Activated T-helper 1 cell treated with anti-CD3 and anti-CD28 coated beads, Interleukin-12 subunit alpha, Interleukin-12 subunit beta, Interleukin-2, Interleukin-4 antibody, amounts not matched to agents 30 ng/mL and 10 ng/mL and 1 ng/mL, durations not matched to agents 14 hours and 24 hours and 36 hours (primary cell): ENCODE measurements at regions of chr12 and their contacts with region 1.

Region 1: DNA sequence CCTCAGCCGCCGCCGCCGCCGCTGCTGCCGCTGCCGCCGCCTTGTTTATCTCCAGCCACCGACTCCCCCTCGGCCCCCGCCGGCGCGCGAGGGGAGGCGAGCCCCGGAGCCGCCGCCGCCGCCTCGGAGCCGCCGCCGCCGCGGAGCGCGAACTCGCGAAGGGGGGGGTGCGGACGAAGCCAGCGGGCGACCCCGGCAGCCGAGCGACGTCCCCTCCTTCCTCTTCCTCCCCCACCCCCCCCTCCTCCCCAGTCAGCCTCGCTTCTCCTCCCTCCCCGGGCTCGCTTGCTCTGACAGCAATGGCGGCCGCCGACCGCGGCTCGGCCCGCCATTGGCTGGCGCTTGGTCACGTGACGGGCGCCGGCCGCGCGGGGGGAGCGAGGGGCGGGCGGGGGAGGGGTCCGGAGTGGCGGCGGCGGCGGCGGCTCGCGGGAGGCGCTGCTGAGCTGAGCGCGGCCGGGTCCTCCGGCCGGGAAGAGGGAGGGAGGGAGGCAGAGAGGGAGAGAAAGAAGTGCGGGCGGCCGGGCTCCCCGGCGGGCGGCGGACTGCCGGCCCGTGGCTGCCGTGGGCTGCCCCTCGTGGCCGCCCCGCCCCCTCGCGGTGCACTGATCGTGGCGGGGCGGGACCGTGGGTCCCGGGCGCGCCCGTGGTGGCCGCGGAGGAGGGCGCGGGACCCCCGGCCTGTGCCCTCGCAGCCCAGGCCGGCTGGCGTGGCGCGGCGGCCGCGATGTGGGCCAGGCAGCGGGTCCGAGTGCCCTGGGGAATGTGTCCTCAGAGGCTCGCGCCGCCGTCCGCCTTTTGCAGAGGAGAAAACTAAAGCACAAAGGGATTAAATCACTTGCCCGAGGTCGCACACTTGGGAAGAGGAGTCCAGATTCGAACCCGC is at the start of gene MED13L:
- DNase-seq: peak; percentile 86
- H3K4me3 Mint-ChIP-seq: peak within 1 kb of the TSS; percentile 99
- H3K27ac Mint-ChIP-seq: peak within 1 kb of the TSS; percentile 96
- H3K4me1 Mint-ChIP-seq: peaks cover 62% of the 10 kb centered on the region
- H3K27me3 Mint-ChIP-seq: peaks cover 12% of the 10 kb centered on the region
- total RNA-seq, gene MED13L: 65.5 and 66.1 TPM in 2 replicates

Region 2: DNA sequence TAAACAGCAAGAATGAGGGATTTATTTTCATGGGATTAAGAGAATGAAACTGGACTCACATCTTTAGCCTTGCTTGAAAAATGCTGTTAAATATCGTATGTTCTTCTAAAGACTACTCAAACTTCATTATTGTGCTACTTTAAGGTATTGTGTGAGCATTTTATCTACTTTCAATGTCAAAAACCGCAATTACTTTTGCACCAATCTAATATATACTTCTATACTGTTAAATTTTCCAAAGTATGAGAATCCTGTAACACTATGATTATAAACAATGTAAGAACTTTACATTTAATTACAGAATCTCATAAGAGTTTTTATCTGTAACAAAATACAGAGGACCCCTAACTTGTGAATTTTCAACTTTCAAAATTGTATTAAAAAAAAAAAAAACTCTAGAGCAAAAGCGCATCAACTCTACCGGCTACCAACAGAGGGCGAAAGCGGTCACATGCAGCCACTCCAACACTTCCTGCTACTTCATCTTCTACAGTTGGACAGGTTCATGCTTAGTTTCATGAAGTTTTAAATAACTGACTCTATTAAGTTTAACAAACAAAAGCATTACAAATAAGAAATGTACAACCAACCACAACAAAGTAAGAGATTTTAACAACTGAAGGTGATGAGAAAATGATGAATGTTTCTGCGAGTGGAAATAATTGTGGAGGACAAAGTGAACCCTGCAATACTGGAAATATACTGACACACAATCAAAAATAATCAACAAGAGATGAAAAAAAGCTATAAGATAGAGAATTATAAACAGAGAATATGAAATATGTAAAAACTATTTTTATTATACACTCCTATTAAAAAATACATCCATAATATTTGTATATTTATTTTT is 211.0 kb before region 1 on chr12:
- intact Hi-C with region 1: loop called (anchors 2 kb)
- DNase-seq: peak; percentile 30
- H3K4me3 Mint-ChIP-seq: no peak overlapping the region
- H3K27ac Mint-ChIP-seq: no peak overlapping the region
- H3K4me1 Mint-ChIP-seq: peaks cover 17% of the 10 kb centered on the region
- H3K27me3 Mint-ChIP-seq: no peaks in the 10 kb centered on the region

Region 3: GRCh38 chr12:116236148-116236731 is 41.4 kb before region 1 on chr12:
- intact Hi-C with region 1: loop called (anchors 2 kb)
- DNase-seq: peak; percentile 33
- H3K4me3 Mint-ChIP-seq: no peak overlapping the region
- H3K27ac Mint-ChIP-seq: peak overlapping the region; percentile 2
- H3K4me1 Mint-ChIP-seq: peaks cover 21% of the 10 kb centered on the region
- H3K27me3 Mint-ChIP-seq: no peaks in the 10 kb centered on the region

Region 4: DNA sequence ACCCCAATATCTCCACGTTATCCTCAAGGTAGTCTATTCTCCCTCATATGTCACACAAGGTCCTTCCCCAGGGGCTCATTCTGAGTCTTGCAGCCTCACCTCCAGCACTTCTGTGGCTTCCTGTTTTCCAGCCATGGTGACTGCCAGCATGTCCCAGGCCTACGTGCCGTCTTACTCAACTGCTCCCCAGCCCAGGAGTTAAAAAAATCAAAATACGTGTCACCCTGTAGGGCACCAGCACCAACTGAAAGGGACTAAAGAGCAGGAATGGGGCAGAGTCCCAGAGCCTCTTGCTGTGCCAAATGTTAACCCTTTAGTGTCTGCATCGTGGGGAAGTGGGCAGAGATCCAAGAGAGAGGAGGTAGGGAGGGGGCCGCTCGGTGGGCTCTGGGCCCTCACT is 36.8 kb after region 1 on chr12:
- intact Hi-C with region 1: no loop called
- DNase-seq: no peak
- H3K4me3 Mint-ChIP-seq: no peak overlapping the region
- H3K27ac Mint-ChIP-seq: peak overlapping the region; percentile 52
- H3K4me1 Mint-ChIP-seq: peaks cover 25% of the 10 kb centered on the region
- H3K27me3 Mint-ChIP-seq: peaks cover 10% of the 10 kb centered on the region

Region 5: GRCh38 chr12:116358893-116359761 is 81.5 kb after region 1 on chr12:
- intact Hi-C with region 1: loop called (anchors 2 kb)
- DNase-seq: peak; percentile 58
- H3K4me3 Mint-ChIP-seq: peak overlapping the region; percentile 56
- H3K27ac Mint-ChIP-seq: peak overlapping the region; percentile 85
- H3K4me1 Mint-ChIP-seq: peaks cover 33% of the 10 kb centered on the region
- H3K27me3 Mint-ChIP-seq: peaks cover 4% of the 10 kb centered on the region

Region 6: GRCh38 chr12:116599285-116600136 is 321.9 kb after region 1 on chr12:
- intact Hi-C with region 1: loop called (anchors 5 kb)
- DNase-seq: peak; percentile 35
- H3K4me3 Mint-ChIP-seq: no peak overlapping the region
- H3K27ac Mint-ChIP-seq: no peak overlapping the region
- H3K4me1 Mint-ChIP-seq: peaks cover 42% of the 10 kb centered on the region
- H3K27me3 Mint-ChIP-seq: peaks cover 4% of the 10 kb centered on the region

Region 7: GRCh38 chr12:116818948-116819832 is 541.6 kb after region 1 on chr12:
- intact Hi-C with region 1: loop called (anchors 2 kb)
- DNase-seq: peak; percentile 85
- H3K4me3 Mint-ChIP-seq: peak overlapping the region; percentile 94
- H3K27ac Mint-ChIP-seq: peak overlapping the region; percentile 98
- H3K4me1 Mint-ChIP-seq: peaks cover 21% of the 10 kb centered on the region
- H3K27me3 Mint-ChIP-seq: peaks cover 9% of the 10 kb centered on the region